CD4-positive, alpha-beta memory T cell (primary cell): ENCODE measurements at regions of chr19 and their contacts with region 1.

Region 1: DNA sequence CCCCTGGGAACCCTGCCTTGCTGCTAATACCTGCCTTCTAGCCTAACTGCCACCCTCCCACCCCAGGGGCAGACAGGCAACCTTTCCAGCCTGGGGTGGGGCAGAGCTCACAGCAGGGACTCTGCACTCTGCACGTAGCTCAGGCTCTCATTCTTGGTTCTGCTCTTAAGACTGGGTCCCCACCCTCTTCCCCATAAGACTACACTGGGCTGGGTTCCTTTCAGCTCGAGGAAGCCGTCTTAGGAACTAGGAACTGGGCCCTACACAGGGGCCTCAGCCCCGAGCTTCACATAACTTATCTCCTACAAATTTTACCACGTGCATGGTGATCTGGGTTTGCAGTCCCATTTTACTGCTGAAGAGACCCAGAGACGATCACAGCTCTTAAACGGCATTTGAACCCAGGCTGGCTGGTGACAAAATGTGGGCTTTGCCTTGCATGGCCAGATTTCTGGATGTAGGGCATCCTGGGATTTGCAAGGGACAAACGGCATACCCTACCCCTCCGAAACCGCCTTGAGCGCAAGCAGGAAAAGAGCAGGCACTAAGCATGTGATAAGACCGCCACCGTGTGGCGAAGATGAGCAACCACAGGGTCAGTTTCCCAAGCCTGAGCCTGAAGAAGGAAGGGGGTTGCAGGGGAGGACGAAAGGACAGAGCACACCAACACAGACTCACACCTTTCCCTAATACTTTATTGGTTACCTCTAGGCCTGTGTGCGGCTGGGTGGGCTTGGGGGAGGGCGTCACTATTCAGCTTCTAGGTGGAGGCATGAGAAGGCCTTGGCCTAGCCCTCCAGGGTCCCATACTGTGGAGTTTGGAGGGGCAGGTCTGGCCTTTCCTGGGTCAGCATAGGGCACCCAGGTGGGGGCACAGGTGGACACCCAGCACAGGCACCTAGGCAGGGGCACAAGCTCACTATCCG is 5.1 kb downstream of the JUNB start:
- DNase-seq: peak; percentile 79 to 84 (median 79)
- H3K4me3 ChIP-seq: peak overlapping the region in 1 of 2 donors; percentile 42
- H3K4me3 Mint-ChIP-seq: peak overlapping the region; percentile 59 to 89 (median 82)
- H3K27ac ChIP-seq: peak overlapping the region; percentile 42
- H3K27ac Mint-ChIP-seq: peak overlapping the region in 6 of 7 donors; percentile 95 to 99 (median 97)
- H3K4me1 ChIP-seq: peaks cover 42% of the 10 kb centered on the region
- H3K4me1 Mint-ChIP-seq: peaks cover 25 to 51% (median 34%) of the 10 kb centered on the region in 4 donors
- H3K27me3 ChIP-seq: no peaks in the 10 kb centered on the region
- H3K27me3 Mint-ChIP-seq: no peaks in the 10 kb centered on the region

Region 2: GRCh38 chr19:12716861-12717260 is 79.5 kb before region 1 on chr19:
- CTCF ChIA-PET with region 1: interaction called, 13 read pairs
- POLR2A ChIA-PET with region 1: interaction called, 54 read pairs
- intact Hi-C with region 1: loop called (anchors 1 kb)
- DNase-seq: peak; percentile 38 to 62 (median 54)
- H3K4me3 ChIP-seq: no peak overlapping the region
- H3K4me3 Mint-ChIP-seq: peak overlapping the region in 1 of 8 donors; percentile 23
- H3K27ac ChIP-seq: no peak overlapping the region
- H3K27ac Mint-ChIP-seq: peak overlapping the region in 3 of 7 donors; percentile 18 to 48 (median 23)
- H3K4me1 ChIP-seq: peaks cover 13% of the 10 kb centered on the region
- H3K4me1 Mint-ChIP-seq: peaks cover 12 to 30% (median 17%) of the 10 kb centered on the region in 4 donors
- H3K27me3 ChIP-seq: no peaks in the 10 kb centered on the region
- H3K27me3 Mint-ChIP-seq: no peaks in the 10 kb centered on the region

Region 3: DNA sequence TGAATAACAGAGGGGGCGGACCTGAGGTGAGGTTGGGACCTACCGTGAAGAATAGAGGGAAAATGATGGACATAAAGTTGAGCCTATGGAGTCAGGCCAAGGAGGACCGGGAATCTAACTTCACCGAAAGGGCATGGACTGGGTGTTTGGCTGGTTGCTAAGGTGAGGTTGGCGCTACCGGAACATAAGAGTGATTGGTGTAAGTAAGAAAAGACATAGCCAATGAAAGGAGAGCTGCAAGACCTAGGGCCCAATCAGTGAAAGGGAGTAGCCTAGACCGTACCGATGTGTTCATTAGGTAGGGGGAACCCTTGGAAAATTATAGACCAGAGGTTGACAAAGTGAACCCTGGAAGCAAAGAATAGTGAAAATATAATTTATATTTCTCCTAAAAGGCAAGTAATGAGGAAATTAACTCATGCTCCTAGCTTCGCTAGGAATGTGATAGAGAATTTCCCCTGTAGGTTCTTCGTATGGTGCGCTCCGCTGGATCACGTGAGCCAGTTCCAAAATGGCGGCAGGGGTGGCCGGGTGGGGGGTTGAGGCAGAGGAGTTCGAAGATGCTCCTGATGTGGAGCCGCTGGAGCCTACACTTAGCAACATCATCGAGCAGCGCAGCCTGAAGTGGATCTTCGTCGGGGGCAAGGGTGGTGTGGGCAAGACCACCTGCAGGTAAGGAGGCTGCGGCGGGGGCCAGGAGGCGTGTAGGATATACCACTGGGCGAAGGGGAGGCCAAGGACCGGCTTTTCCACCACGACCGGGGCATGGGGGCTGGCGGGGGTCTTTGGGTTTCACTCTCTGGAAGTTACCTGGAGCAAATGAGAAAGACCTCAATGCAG is 59.2 kb before region 1 on chr19 and contains the start of gene GET3:
- CTCF ChIA-PET with region 1: interaction called, 6 read pairs
- POLR2A ChIA-PET with region 1: interaction called, 77 read pairs
- intact Hi-C with region 1: loop called (anchors 2 kb)
- DNase-seq: peak; percentile 87 to 91 (median 89)
- H3K4me3 ChIP-seq: peak within 1 kb of the TSS; percentile 77 to 80
- H3K4me3 Mint-ChIP-seq: peak within 1 kb of the TSS; percentile 98 to 100 (median 99)
- H3K27ac ChIP-seq: peak within 1 kb of the TSS; percentile 87
- H3K27ac Mint-ChIP-seq: peak within 1 kb of the TSS; percentile 94 to 98 (median 97)
- H3K4me1 ChIP-seq: peaks cover 40% of the 10 kb centered on the region
- H3K4me1 Mint-ChIP-seq: peaks cover 25 to 50% (median 36%) of the 10 kb centered on the region in 4 donors
- H3K27me3 ChIP-seq: no peaks in the 10 kb centered on the region
- H3K27me3 Mint-ChIP-seq: peaks cover 0 to 2% of the 10 kb centered on the region in 2 donors
- total RNA-seq, gene GET3: 30.8 to 34.5 TPM

Region 4: DNA sequence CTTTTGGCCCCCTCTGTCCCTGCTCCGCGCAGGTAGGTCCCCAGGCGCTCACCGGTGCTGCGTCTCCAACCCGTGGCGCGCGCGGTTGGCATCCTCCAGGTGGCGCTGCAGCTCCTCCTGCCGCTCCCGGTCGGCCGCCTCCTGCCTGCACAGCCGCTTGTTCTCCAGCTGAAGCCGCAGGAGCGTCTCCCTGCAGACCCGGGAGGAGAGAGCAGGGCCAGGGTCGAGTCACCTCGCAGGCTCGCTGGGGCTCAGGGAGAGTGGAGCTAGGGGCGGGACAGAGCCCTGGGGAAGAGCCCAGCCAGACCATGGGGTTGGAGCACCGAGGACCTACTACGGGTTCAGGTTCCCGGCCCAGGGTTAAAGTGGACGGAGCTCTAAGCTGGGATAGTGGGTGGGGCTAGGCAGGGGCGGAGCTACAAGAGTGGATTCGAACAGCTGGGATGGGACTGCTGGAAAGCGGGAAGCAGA is 30.3 kb before region 1 on chr19:
- CTCF ChIA-PET with region 1: interaction called, 906 read pairs
- POLR2A ChIA-PET with region 1: interaction called, 1,162 read pairs
- intact Hi-C with region 1: loop called (anchors 1 kb)
- DNase-seq: peak; percentile 63 to 83 (median 69)
- H3K4me3 ChIP-seq: no peak overlapping the region
- H3K4me3 Mint-ChIP-seq: peak overlapping the region in 1 of 8 donors; percentile 48
- H3K27ac ChIP-seq: no peak overlapping the region
- H3K27ac Mint-ChIP-seq: peak overlapping the region in 1 of 7 donors; percentile 42
- H3K4me1 ChIP-seq: no peaks in the 10 kb centered on the region
- H3K4me1 Mint-ChIP-seq: peaks cover 2 to 14% (median 6%) of the 10 kb centered on the region in 4 donors
- H3K27me3 ChIP-seq: no peaks in the 10 kb centered on the region
- H3K27me3 Mint-ChIP-seq: no peaks in the 10 kb centered on the region

Region 5: DNA sequence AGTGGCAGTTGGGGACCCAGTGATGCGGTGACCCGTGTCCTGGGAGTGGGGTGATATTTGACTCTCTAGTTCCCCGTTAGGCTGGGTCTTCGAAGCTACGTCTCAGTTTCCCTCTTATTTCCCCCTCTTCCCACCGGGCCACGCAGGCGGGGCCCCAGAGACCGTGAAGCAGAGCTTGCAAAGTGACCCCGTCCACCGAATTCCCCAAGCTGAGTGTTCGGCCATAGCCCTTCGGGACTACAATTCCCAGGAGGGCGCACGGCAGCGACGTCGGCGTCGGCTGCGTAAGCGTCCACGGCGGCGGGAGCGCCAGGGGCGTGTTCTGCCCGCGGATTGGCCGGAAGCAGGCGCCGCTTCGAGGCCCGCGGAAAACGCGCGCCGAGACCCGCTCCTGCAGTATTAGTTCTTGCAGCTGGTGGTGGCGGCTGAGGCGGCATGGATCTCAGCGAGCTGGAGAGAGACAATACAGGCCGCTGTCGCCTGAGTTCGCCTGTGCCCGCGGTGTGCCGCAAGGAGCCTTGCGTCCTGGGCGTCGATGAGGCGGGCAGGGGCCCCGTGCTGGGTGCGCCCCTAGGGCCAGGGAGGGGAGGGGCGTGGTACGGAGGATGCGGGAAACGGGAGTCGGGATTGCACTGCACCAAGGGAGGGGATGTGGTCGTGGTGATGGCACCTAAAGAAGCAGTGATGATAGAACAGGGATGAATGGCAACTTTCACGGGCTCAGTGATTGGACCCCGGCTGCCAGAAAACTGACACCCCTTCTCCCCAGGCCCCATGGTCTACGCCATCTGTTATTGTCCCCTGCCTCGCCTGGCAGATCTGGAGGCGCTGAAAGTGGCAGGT is 10.1 kb after region 1 on chr19 and contains the start of gene RNASEH2A:
- CTCF ChIA-PET with region 1: interaction called, 15 read pairs
- POLR2A ChIA-PET with region 1: interaction called, 68 read pairs
- intact Hi-C with region 1: no loop called
- DNase-seq: peak; percentile 82 to 86 (median 84)
- H3K4me3 ChIP-seq: peak within 1 kb of the TSS; percentile 53 to 84
- H3K4me3 Mint-ChIP-seq: peak within 1 kb of the TSS; percentile 75 to 98 (median 90)
- H3K27ac ChIP-seq: peak within 1 kb of the TSS; percentile 63
- H3K27ac Mint-ChIP-seq: peak within 1 kb of the TSS; percentile 75 to 94 (median 89)
- H3K4me1 ChIP-seq: peaks cover 24% of the 10 kb centered on the region
- H3K4me1 Mint-ChIP-seq: peaks cover 15 to 33% (median 22%) of the 10 kb centered on the region in 4 donors
- H3K27me3 ChIP-seq: no peaks in the 10 kb centered on the region
- H3K27me3 Mint-ChIP-seq: no peaks in the 10 kb centered on the region
- total RNA-seq, gene RNASEH2A: 10.5 to 12.6 TPM